Posterior vena cava (tissue), 2 donors: ENCODE measurements at regions of chr17 and their contacts with region 1.

Region 1: GRCh38 chr17:29771551-29771950 is 148.8 kb upstream of the CORO6 start:
- DNase-seq: no peak

Region 2: GRCh38 chr17:29622337-29623282 is 148.9 kb before region 1 on chr17 and contains the start of gene CORO6:
- intact Hi-C with region 1: loop called in 1 of 2 experiments (anchors 10 kb)
- DNase-seq: no peak
- total RNA-seq, gene CORO6: 26.7 to 31.6 TPM

Region 3: GRCh38 chr17:29633886-29634285 is 137.7 kb before region 1 on chr17:
- intact Hi-C with region 1: loop called (anchors 10 kb)
- DNase-seq: no peak